Activated CD4-positive, alpha-beta T cell treated with anti-CD3 and anti-CD28 coated beads for 36 hours (primary cell): ENCODE measurements at regions of chr6 and their contacts with region 1.

Region 1: DNA sequence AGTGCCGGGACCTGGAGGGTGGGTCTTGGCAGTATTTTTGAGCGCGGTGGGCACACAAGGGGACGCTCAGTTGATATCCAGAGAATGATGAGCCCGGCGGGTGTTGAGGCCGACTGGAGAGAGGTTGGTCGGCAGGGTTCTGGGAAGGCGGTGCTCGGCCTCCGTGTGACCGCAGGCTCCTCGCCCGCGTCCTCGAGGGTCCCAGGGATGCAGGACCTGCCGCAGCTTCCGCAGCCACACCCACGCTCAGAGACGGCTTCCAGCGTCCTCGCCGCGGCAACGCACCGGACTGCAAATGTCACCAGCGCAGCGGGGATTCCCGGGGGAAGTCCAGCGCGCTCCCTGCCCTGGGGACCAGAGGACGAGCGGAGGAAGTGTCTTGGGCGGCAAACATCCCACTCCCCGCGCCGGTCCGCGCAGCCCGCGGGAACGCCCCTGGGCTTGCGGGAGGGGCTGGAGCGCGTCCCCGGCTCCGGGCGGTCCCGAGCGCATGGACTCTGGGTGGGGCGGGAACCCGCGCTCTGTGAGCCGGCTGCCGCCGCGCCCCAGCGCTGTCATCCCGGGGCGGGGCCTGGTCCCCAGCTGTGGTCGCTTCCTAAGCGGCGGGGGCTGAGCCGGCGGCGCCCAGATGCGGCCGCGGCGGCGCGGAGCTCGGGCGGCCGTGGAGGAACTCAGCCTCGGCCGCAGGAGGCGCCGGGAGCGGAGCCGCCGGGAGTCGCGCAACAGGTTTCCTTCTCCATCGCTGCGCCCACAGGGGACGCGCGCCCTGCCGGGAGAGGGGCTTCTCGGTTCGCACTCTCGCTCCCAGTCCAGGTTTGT is at the start of gene STX11:
- DNase-seq: peak; percentile 91
- ATAC-seq: peak; percentile 80
- H3K4me3 Mint-ChIP-seq: peak within 1 kb of the TSS; percentile 84
- H3K27ac Mint-ChIP-seq: peak within 1 kb of the TSS; percentile 95
- H3K4me1 Mint-ChIP-seq: peaks cover 41% of the 10 kb centered on the region
- H3K27me3 Mint-ChIP-seq: peaks cover 5% of the 10 kb centered on the region
- total RNA-seq, gene STX11: 19.6 to 20.9 TPM

Region 2: DNA sequence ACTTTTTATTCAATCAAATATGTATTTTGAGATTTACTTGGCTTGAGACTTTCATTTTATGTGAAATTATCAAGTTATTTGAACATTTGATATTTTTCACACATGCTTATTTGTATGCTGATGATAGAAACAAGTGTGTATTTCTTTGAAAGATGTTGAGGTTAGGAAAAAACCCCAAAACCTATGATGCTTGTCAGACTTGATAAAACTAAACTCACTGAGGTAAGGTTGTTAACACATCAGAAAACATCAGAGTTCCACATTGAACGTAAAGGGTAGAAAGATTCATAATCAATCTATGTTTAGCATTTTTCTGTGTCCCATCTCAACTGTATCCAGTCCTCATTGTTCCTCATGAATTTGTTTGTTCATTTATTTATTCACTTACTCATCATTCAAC is 66.9 kb before region 1 on chr6:
- CTCF ChIA-PET with region 1: no interaction called
- POLR2A ChIA-PET with region 1: no interaction called
- intact Hi-C with region 1: no loop called
- DNase-seq: no peak
- ATAC-seq: no peak
- H3K4me3 Mint-ChIP-seq: no peak overlapping the region
- H3K27ac Mint-ChIP-seq: no peak overlapping the region
- H3K4me1 Mint-ChIP-seq: no peaks in the 10 kb centered on the region
- H3K27me3 Mint-ChIP-seq: no peaks in the 10 kb centered on the region

Region 3: DNA sequence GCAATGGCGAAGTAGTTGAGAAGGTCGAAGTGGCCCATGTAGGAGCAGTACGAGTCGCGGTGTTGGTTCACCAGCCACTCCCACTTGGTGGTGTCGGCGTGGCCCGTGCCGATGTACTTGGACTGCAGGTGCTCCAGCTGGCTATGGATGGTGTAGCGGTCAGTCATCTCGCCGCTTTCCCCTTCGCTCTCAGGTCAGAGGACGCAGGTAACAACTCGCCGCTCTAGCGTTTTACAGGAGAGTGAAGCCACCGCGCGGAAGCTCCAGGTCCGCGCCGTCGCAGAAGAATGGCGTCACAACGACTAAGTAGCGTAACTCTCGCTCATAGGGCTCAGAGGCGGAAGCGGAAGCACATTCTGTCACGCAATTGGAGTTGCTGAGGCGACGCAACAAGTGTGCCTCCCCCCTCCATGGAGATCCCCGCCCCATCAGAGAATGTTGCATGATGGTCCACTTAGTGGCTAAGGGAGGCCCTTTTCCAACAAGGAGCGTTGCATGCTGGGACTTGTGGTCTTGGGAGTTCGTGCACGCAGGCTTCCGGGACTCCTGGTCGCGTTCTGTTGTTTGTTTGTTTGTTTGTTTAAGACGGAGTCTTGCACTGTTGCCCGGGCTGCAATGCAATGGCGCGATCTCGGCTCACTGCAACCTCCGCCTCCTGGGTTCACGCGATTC is 54.6 kb before region 1 on chr6 and contains the start of gene SF3B5:
- CTCF ChIA-PET with region 1: no interaction called
- POLR2A ChIA-PET with region 1: interaction called, 5 read pairs
- intact Hi-C with region 1: loop called (anchors 1 kb)
- DNase-seq: peak; percentile 98
- ATAC-seq: peak; percentile 97
- H3K4me3 Mint-ChIP-seq: peak within 1 kb of the TSS; percentile 84
- H3K27ac Mint-ChIP-seq: peak within 1 kb of the TSS; percentile 91
- H3K4me1 Mint-ChIP-seq: peaks cover 22% of the 10 kb centered on the region
- H3K27me3 Mint-ChIP-seq: no peaks in the 10 kb centered on the region
- total RNA-seq, gene SF3B5: 152 to 164 TPM

Region 4: GRCh38 chr6:144178323-144178722 is 28.2 kb after region 1 on chr6:
- CTCF ChIA-PET with region 1: no interaction called
- POLR2A ChIA-PET with region 1: no interaction called
- intact Hi-C with region 1: loop called (anchors 1 kb)
- DNase-seq: peak; percentile 13
- ATAC-seq: peak; percentile 83
- H3K4me3 Mint-ChIP-seq: no peak overlapping the region
- H3K27ac Mint-ChIP-seq: peak overlapping the region; percentile 29
- H3K4me1 Mint-ChIP-seq: peaks cover 49% of the 10 kb centered on the region
- H3K27me3 Mint-ChIP-seq: no peaks in the 10 kb centered on the region

Region 5: GRCh38 chr6:144284783-144285547 is 134.9 kb after region 1 on chr6 and contains the start of gene UTRN:
- CTCF ChIA-PET with region 1: no interaction called
- POLR2A ChIA-PET with region 1: no interaction called
- intact Hi-C with region 1: loop called in 1 of 2 experiments (anchors 5 kb)
- DNase-seq: peak; percentile 71
- ATAC-seq: peak; percentile 75
- H3K4me3 Mint-ChIP-seq: peak within 1 kb of the TSS; percentile 88
- H3K27ac Mint-ChIP-seq: peak within 1 kb of the TSS; percentile 73
- H3K4me1 Mint-ChIP-seq: peaks cover 16% of the 10 kb centered on the region
- H3K27me3 Mint-ChIP-seq: peaks cover 37% of the 10 kb centered on the region
- total RNA-seq, gene UTRN: 43.4 to 46.2 TPM

Region 6: GRCh38 chr6:144377586-144378210 is 227.6 kb after region 1 on chr6:
- CTCF ChIA-PET with region 1: no interaction called
- POLR2A ChIA-PET with region 1: no interaction called
- intact Hi-C with region 1: no loop called
- DNase-seq: peak; percentile 33
- ATAC-seq: peak; percentile 68
- H3K4me3 Mint-ChIP-seq: no peak overlapping the region
- H3K27ac Mint-ChIP-seq: peak overlapping the region; percentile 40
- H3K4me1 Mint-ChIP-seq: peaks cover 43% of the 10 kb centered on the region
- H3K27me3 Mint-ChIP-seq: no peaks in the 10 kb centered on the region

Region 7: DNA sequence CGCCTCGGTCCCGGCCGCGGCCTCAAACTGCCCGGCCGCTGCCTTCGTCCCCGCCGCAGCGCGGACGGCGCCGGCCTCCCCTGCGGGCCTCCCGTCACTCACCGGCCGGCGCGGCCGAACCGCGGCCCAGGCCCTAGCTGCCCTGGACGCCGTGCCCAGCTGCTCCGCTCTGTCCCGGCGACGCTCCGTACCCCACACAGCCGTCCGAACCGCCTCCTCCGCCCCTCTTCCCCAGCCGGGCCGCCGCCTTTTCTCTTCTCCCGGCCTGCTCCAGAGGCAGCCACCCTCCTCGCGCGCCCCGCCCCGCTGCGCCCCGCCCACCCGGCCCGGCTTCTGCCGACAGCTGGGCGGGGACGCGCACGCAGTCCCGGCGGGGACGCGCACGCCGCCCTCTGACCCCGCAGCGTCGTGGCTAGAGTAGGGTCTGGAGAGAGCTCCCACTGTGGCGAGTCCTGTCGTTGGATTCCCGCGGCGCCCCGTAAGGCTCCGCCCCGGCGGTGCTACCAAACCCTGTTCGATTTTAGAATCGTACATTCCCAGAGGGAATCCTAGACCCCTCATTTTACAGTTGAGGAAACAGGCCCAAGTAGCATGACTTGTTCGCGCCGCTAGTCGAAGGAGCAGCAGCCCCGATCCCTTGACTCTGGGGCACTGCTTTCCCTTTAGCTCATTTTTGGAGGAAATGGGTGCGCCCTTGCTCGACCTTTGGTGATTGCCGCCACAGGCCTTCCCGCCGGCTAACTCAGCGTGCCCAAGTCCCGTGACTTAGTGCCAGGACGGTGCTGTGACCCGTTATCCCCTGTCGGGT is 1664.6 kb after region 1 on chr6 and contains the start of gene FBXO30:
- CTCF ChIA-PET with region 1: no interaction called
- POLR2A ChIA-PET with region 1: no interaction called
- intact Hi-C with region 1: loop called in 1 of 2 experiments (anchors 10 kb)
- DNase-seq: peak; percentile 90
- ATAC-seq: peak; percentile 77
- H3K4me3 Mint-ChIP-seq: peak within 1 kb of the TSS; percentile 89
- H3K27ac Mint-ChIP-seq: peak within 1 kb of the TSS; percentile 89
- H3K4me1 Mint-ChIP-seq: peaks cover 37% of the 10 kb centered on the region
- H3K27me3 Mint-ChIP-seq: no peaks in the 10 kb centered on the region
- total RNA-seq, gene FBXO30: 2.3 to 2.8 TPM